Mammary epithelial cell (primary cell): ENCODE measurements at regions of chr14 and their contacts with region 1.

Region 1: DNA sequence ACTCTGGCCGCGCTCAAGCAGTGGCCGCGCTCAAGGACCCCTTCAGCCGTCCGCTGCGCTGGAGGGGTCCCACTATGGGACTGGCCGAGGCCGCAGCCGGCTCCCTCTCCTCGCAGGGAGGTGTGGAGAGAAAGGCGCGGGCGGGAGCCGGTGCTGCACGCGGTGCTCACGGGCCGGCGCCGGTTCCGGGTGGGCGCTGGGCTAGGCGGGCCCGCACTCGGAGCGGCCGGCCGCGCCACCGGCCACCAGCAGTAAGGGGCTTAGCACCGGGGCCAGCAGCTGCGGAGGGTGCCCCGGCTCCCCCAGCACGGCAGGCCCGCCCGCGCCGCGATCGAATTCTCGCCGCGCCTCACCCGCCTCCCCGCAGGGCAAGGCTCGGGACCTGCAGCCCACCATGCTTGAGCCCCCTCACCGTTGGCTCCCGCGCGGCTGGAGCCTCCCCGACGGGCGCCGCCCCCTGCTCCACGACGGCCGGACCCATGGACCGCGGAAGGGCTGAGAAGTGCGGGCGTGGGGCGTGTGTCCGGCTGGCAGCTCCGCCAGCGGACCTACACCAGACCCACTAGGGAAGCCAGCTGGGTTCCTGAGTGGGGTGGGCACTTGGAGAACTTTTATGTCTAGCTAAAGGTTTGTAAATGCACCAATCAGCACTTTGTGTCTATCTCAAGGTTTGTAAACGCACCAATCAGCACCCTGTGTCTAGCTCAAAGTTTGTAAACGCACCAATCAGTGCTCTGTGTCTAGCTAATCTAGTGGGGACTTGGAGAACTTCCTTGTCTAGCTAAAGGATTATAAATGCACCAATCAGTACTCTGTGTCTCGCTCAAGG is 49.5 kb downstream of the KLHL28 start:
- DNase-seq: no peak
- H3K4me3 ChIP-seq: peak overlapping the region in 2 of 3 experiments; percentile 34 to 35
- H3K27ac ChIP-seq: no peak overlapping the region
- H3K4me1 ChIP-seq: no peaks in the 10 kb centered on the region
- H3K27me3 ChIP-seq: peaks cover 3% of the 10 kb centered on the region
- CTCF ChIP-seq: no peak

Region 2: GRCh38 chr14:44961604-44962333 is 49.5 kb after region 1 on chr14 and contains the starts of genes KLHL28 and TOGARAM1:
- CTCF ChIA-PET with region 1: no interaction called
- dilution Hi-C with region 1: no loop called
- in situ Hi-C with region 1: no loop called
- intact Hi-C with region 1: loop called (anchors 1 kb)
- DNase-seq: peak; percentile 100
- H3K4me3 ChIP-seq: peak within 1 kb of the TSS; percentile 86 to 98 (median 95)
- H3K27ac ChIP-seq: peak within 1 kb of the TSS; percentile 85
- H3K4me1 ChIP-seq: peaks cover 6% of the 10 kb centered on the region
- H3K27me3 ChIP-seq: no peaks in the 10 kb centered on the region
- CTCF ChIP-seq: no peak
- total RNA-seq, gene KLHL28: 10.2 to 20.3 TPM
- total RNA-seq, gene TOGARAM1: 10.4 to 18.7 TPM

Region 3: GRCh38 chr14:44988694-44989093 is 76.4 kb after region 1 on chr14:
- CTCF ChIA-PET with region 1: no interaction called
- dilution Hi-C with region 1: no loop called
- in situ Hi-C with region 1: no loop called
- intact Hi-C with region 1: no loop called
- DNase-seq: no peak
- H3K4me3 ChIP-seq: no peak overlapping the region
- H3K27ac ChIP-seq: no peak overlapping the region
- H3K4me1 ChIP-seq: no peaks in the 10 kb centered on the region
- H3K27me3 ChIP-seq: no peaks in the 10 kb centered on the region
- CTCF ChIP-seq: no peak

Region 4: DNA sequence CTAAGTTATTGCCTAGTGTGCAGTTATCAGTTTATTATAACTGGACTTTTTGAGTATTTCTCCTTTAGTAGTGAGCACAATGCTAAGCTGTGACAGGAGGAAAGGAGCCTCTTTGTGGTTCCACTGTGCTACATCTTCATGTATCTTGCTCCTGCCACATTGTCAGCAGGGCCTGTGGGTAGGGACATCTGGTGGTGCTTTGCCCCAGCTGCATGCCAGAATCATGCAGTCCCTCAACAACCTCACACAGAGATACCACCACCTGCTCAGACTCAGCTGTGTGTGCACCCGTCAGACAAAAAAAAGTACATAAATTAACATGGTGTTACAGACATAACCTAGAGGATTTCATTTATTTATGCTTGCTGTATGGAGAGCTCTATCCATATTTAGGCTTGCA is 289.6 kb after region 1 on chr14:
- CTCF ChIA-PET with region 1: no interaction called
- dilution Hi-C with region 1: no loop called
- in situ Hi-C with region 1: no loop called
- intact Hi-C with region 1: loop called (anchors 1 kb)
- DNase-seq: no peak
- H3K4me3 ChIP-seq: no peak overlapping the region
- H3K27ac ChIP-seq: no peak overlapping the region
- H3K4me1 ChIP-seq: peaks cover 18% of the 10 kb centered on the region
- H3K27me3 ChIP-seq: no peaks in the 10 kb centered on the region
- CTCF ChIP-seq: peak; percentile 10 to 52

Region 5: DNA sequence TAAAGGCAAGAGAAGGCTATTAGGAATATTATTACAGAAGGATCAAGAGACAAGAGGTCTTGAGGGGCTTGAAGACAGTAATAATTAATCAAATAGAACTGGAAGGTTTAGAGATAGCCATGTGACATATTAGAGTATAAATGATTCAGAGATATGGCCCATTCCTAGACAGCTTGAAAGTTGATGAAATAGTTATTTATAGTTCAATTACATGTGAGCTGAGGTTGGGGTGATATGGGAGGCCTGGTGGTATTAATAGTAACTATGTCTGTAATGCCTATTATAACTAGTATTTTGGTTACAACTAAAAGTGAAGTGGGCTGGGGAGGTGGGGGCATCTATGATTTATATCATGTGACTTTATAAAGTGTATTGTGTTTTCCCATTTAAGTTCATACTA is 354.8 kb after region 1 on chr14:
- CTCF ChIA-PET with region 1: interaction called, 18 read pairs
- dilution Hi-C with region 1: no loop called
- in situ Hi-C with region 1: loop called in 1 of 2 experiments (anchors 10 kb)
- intact Hi-C with region 1: loop called (anchors 1 kb)
- DNase-seq: no peak
- H3K4me3 ChIP-seq: no peak overlapping the region
- H3K27ac ChIP-seq: no peak overlapping the region
- H3K4me1 ChIP-seq: no peaks in the 10 kb centered on the region
- H3K27me3 ChIP-seq: no peaks in the 10 kb centered on the region
- CTCF ChIP-seq: no peak

Region 6: GRCh38 chr14:45526715-45527549 is 614.7 kb after region 1 on chr14:
- CTCF ChIA-PET with region 1: no interaction called
- dilution Hi-C with region 1: no loop called
- in situ Hi-C with region 1: loop called in 1 of 2 experiments (anchors 25 kb)
- intact Hi-C with region 1: loop called (anchors 2 kb)
- DNase-seq: peak; percentile 45
- H3K4me3 ChIP-seq: no peak overlapping the region
- H3K27ac ChIP-seq: no peak overlapping the region
- H3K4me1 ChIP-seq: no peaks in the 10 kb centered on the region
- H3K27me3 ChIP-seq: no peaks in the 10 kb centered on the region
- CTCF ChIP-seq: peak; percentile 70 to 77